Activated naive CD4-positive, alpha-beta T cell treated with anti-CD3 and anti-CD28 coated beads for 36 hours (primary cell): ENCODE measurements at regions of chr4 and their contacts with region 1.

Region 1: GRCh38 chr4:19557161-19557560 is 694.5 kb upstream of the SLIT2 start:
- DNase-seq: no peak
- H3K4me3 Mint-ChIP-seq: no peak overlapping the region
- H3K27ac Mint-ChIP-seq: no peak overlapping the region
- H3K4me1 Mint-ChIP-seq: no peaks in the 10 kb centered on the region
- H3K27me3 Mint-ChIP-seq: no peaks in the 10 kb centered on the region

Region 2: DNA sequence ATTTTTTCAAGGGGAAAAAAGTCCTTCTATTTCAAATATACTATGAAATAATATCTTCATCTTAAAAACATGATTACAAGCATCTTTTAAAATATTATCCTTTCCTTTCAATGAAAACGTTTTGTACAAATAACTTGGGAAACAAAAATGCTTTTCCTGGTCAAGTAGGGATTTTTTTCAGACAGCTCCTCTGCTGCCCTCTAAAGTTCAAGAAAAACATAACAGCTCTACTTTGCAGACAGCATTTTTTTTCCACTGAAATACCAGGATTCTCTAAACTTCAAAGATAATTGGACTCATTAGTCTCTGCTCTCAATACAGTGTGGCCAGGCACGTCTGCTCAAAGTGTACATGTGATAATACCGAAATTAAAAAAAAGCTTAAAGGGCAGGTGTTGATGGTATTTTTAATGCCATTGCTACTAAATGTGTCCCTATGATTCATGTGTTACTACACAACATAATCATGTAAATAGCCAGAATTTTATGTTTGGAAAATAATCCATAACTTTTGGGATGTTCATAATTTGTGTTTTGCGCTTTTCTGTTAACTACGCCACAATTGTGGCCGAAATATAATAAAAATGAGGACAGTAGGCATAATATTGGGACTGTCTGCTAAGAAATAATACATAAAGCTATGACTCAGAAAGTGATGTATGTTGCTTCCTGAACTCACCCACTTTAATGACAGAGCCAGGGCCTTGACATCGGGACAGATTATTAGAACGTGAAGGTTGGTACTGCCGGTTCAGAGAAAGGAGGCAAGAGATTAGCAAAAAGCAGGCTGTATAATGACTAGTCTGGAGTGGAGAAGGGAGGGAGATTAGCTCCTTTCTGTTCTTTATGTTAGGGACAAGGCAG is 1912.5 kb after region 1 on chr4:
- CTCF ChIA-PET with region 1: no interaction called
- intact Hi-C with region 1: loop called (anchors 10 kb)
- DNase-seq: no peak
- H3K4me3 Mint-ChIP-seq: no peak overlapping the region
- H3K27ac Mint-ChIP-seq: no peak overlapping the region
- H3K4me1 Mint-ChIP-seq: no peaks in the 10 kb centered on the region
- H3K27me3 Mint-ChIP-seq: peaks cover 2% of the 10 kb centered on the region